ENCODE measurements at regions of chr19 and their contacts with region 1.

Region 1: DNA sequence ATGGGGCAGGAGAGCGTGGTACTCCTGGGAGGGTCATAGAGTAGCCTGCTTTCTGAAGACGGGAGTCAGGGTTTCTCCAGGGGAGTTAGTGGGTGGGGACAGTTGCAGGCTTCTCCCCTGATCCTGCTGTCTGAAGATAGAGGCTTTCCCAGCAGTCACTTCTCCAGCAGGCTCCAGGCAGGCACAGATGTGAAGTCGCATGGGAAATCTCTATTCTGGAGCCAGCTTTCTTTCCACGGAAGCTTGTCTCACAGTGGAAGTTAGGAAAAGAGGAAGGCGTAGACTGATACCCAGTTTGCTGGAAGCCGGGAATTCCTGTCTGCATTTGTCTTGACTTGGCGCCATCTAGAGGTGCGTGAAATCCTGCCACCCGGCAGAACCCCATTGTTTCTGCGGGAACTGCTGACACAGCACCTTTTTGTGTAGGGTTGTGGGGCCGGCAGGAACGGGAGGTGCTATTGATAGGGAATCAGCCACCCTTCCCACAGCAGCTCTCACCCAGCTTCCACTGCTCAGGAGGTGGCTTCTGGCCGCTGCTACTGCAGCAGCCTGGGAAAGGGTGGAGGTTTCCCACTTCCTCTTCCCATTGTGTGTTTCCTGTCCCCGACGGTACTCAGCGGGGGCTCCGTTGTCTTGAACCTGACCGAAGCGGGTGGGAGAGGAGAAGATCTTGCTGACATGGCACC is 28.5 kb upstream of the NPAS1 start:
- DNase-seq: peak; percentile 80 to 89
- ATAC-seq: peak; percentile 67 to 88 (median 78)
- H3K4me3 ChIP-seq: no peak overlapping the region
- H3K27ac ChIP-seq: peak overlapping the region; percentile 63
- H3K4me1 ChIP-seq: peaks cover 27% of the 10 kb centered on the region
- H3K27me3 ChIP-seq: no peaks in the 10 kb centered on the region
- CTCF ChIP-seq: peak; percentile 77

Region 2: GRCh38 chr19:46753420-46754155 is 237.5 kb before region 1 on chr19:
- intact Hi-C with region 1: loop called (anchors 5 to 10 kb)
- DNase-seq: peak in 1 of 2 donors; percentile 40
- ATAC-seq: peak in 2 of 4 donors; percentile 35 to 49
- H3K4me3 ChIP-seq: no peak overlapping the region
- H3K27ac ChIP-seq: no peak overlapping the region
- H3K4me1 ChIP-seq: no peaks in the 10 kb centered on the region
- H3K27me3 ChIP-seq: no peaks in the 10 kb centered on the region
- CTCF ChIP-seq: peak; percentile 39

Region 3: DNA sequence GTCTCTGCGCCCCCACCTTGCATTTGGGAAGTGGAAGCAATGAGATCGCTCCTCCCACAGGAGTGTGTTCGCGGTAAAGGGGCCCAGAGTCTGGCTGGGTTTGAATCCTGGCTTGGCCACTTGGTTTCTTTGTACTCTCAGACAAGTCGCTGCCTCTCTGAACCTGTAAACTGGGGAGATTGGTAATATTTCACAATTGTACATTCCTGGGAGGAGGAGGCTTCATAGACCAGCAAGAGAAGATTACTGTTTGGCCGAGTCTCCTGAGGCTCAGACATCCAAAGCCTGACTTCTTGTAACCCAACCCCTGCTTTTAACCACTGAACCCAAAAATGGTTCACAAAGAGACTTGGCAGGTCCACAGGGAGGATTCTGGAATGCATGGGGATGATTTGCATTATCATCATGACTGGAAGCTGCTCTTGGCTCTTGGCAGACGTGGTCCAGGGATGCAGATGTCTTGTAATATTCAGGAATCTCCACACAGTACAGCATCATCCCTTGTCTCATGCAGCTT is 231.3 kb before region 1 on chr19:
- intact Hi-C with region 1: loop called (anchors 5 to 10 kb)
- DNase-seq: peak in 1 of 2 donors; percentile 61
- ATAC-seq: peak; percentile 29 to 65 (median 51)
- H3K4me3 ChIP-seq: no peak overlapping the region
- H3K27ac ChIP-seq: peak overlapping the region; percentile 46
- H3K4me1 ChIP-seq: peaks cover 23% of the 10 kb centered on the region
- H3K27me3 ChIP-seq: no peaks in the 10 kb centered on the region
- CTCF ChIP-seq: no peak

Measured in psoas muscle (tissue), 8 donors.